Endothelial cell of umbilical vein (primary cell): ENCODE measurements at regions of chr17 and their contacts with region 1.

Region 1: GRCh38 chr17:46841561-46842379 is 9.6 kb upstream of the WNT9B start:
- DNase-seq: no peak
- H3K4me3 ChIP-seq: no peak overlapping the region
- H3K27ac ChIP-seq: no peak overlapping the region
- H3K4me1 ChIP-seq: no peaks in the 10 kb centered on the region
- H3K27me3 ChIP-seq: peaks cover 6 to 9% of the 10 kb centered on the region in 2 experiments
- CTCF ChIP-seq: peak; percentile 74 to 93
- POLR2A ChIP-seq: no peak

Region 2: GRCh38 chr17:46859996-46860395 is 18.2 kb after region 1 on chr17:
- CTCF ChIA-PET with region 1: interaction called, 18 read pairs
- POLR2A ChIA-PET with region 1: no interaction called
- dilution Hi-C with region 1: no loop called
- intact Hi-C with region 1: no loop called
- DNase-seq: no peak
- H3K4me3 ChIP-seq: no peak overlapping the region
- H3K27ac ChIP-seq: no peak overlapping the region
- H3K4me1 ChIP-seq: no peaks in the 10 kb centered on the region
- H3K27me3 ChIP-seq: no peaks in the 10 kb centered on the region
- CTCF ChIP-seq: no peak
- POLR2A ChIP-seq: no peak

Region 3: GRCh38 chr17:46894476-46895151 is 52.8 kb after region 1 on chr17:
- CTCF ChIA-PET with region 1: no interaction called
- POLR2A ChIA-PET with region 1: no interaction called
- dilution Hi-C with region 1: no loop called
- intact Hi-C with region 1: no loop called
- DNase-seq: no peak
- H3K4me3 ChIP-seq: no peak overlapping the region
- H3K27ac ChIP-seq: no peak overlapping the region
- H3K4me1 ChIP-seq: no peaks in the 10 kb centered on the region
- H3K27me3 ChIP-seq: peaks cover 5 to 10% of the 10 kb centered on the region in 2 experiments
- CTCF ChIP-seq: no peak
- POLR2A ChIP-seq: no peak

Region 4: DNA sequence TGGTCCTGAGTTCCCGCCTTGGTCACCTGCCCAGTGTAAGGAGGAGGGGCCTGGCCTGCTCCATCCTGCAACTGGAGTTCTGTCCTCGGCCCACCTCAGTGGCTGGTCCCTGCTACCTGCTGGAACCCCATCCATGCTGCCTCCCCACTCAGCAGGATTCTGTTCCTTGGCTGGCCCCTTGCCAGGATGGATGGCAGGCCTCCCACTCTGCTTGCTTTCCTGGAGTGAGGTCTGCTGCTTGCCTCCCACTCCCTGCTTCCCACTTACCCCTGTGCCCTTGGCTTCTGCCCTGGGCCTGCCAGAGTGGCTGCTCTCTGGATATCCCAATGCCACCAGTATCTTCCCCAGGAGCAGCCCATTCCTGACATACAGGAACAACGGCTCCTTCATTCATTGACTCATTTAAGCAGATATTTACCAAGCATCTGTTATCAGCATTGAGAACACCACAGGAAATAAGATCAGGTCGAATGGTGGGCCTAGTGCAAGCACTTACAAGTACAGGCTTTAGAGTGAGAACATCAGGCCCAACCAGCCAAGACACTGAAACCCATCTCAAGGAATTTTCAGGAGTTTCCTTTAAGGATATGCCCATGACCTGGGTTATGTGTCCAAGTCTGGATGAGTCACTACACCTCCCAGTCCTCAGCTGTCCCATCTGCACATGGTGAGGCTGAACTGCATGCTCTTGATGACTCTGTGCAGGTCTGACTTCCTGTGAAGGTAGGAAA is 154.2 kb after region 1 on chr17:
- CTCF ChIA-PET with region 1: no interaction called
- POLR2A ChIA-PET with region 1: no interaction called
- dilution Hi-C with region 1: no loop called
- intact Hi-C with region 1: loop called (anchors 2 kb)
- DNase-seq: peak; percentile 65
- H3K4me3 ChIP-seq: no peak overlapping the region
- H3K27ac ChIP-seq: peak overlapping the region; percentile 9
- H3K4me1 ChIP-seq: peaks cover 8% of the 10 kb centered on the region
- H3K27me3 ChIP-seq: no peaks in the 10 kb centered on the region
- CTCF ChIP-seq: no peak
- POLR2A ChIP-seq: no peak